GM10248 (cell line): ENCODE measurements at regions of chr12 and their contacts with region 1.

Region 1: DNA sequence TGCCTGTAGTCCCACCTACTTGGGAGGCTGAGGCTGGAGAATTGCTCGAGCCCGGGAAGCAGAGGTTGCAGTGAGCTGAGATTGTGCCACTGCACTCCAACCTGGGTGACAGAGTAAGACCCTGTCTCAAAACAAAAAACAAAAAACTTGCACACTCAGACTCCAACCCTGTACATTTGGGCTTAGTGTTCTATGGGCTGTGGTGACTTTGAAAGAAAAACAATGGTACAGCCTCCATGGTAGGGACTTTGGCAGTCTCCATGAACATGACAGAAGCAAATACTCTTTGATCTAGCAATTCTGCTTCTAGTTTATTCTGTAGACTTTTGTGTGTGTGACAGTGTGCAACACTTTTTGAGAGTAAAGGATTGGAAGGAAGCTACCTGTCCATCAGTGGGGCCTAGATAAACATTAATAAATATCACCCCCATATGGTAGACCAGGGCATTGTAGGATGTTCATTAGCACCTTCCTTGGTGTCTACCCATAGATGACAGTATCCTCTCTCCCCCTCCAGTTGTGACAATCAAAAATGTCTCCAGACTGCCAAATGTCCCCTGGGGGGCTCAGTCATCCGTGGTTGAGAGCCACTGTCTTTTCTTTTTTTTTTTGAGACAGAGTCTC is 10.7 kb downstream of the SNRNP35 start:
- DNase-seq: peak; percentile 75
- CTCF ChIP-seq: peak; percentile 47

Region 2: GRCh38 chr12:123457980-123458783 is 10.5 kb before region 1 on chr12 and contains the start of gene SNRNP35:
- CTCF ChIA-PET with region 1: interaction called, 10 read pairs
- POLR2A ChIA-PET with region 1: no interaction called
- DNase-seq: peak; percentile 84
- CTCF ChIP-seq: no peak

Region 3: DNA sequence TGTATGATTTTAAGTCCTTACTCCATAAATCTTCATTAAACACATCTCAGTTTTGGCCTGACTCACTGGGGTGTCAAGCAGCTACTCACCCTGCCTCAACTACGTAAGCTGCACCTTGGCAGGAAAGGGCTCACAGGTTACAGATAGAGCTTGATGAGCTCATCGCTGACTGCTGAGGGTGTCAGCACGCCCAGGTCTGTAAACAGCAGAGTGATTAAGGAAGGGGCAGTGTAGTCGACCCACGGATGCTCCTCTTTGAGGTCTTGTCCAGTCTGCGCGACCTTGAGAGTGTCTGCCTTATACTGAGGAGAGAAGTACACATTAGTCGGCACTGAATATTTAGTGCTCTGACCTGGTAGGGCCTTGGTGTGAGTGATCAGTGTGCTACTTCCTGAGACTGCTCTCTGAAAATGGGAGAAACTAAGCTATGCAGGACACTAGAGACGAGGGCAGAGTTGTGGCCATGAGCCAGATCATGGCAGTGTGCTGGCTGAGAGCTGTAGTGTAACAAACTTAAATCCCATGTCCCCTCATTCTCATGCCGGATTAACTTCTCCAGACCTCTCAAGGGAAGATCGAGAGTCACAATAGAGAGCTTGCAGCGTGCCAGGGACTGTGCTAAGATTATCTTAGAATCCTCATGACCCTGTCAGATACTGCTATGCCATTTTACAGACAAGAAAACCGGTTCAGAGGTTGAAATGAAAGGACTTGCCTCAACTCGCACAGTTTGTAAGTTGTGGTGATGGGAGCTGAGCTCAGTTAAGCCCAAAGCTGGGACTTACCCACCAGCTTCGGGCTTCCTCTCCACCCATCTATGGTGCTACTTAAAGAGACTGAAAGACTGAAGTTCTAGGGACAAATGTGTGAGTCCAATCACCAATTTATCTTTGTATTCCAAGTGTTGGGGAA is 153.2 kb after region 1 on chr12:
- CTCF ChIA-PET with region 1: no interaction called
- POLR2A ChIA-PET with region 1: no interaction called
- DNase-seq: no peak
- CTCF ChIP-seq: no peak

Region 4: DNA sequence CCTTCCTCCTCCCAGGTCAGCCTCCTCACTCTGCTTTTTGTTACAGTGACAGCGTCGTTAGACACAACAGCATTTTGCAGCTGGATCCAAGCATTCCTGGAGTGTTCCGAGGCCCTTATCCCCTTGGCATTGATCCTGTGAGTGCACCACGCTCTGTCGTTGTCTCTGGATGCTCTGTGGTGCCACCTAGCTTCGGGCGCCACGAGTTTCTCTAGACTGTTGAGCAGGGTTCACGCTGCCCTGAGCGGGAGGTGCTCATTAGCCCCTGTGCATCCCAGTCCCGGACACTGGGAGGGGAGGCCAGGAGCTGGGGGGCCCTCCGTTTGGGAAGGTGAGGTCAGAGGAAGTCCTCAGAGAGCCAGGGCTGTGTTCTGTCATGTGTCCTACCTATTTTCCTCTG is 276.2 kb after region 1 on chr12:
- CTCF ChIA-PET with region 1: no interaction called
- POLR2A ChIA-PET with region 1: no interaction called
- DNase-seq: no peak
- CTCF ChIP-seq: no peak